ENCODE measurements at regions of chr21 and their contacts with region 1.

Region 1: DNA sequence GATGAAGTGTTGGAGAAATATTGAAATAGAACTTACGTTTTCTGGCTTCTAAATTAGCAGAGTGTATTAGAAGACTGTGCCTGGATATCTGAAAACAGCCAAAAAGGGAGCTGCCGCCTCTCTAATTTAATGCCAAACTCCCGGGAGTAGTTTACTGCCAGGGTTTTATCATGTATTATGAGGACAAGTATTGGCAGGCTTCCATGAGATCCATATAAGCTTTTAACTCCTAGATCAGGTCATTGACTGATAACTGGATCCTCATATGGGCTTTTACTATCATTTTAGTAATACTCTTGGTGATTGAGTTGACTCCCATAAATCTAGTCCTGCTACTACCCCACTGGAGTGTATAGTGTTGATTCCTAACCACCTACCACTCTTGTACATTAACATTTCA is 178.4 kb upstream of the CXADR start:
- DNase-seq: no peak
- H3K4me3 ChIP-seq: no peak overlapping the region
- H3K27ac ChIP-seq: no peak overlapping the region
- H3K4me1 ChIP-seq: no peaks in the 10 kb centered on the region
- H3K27me3 ChIP-seq: peaks cover 9% of the 10 kb centered on the region; the same call in 1 of the 2 replicates
- CTCF ChIP-seq: no peak

Region 2: GRCh38 chr21:16377120-16377658 is 957.3 kb before region 1 on chr21:
- CTCF ChIA-PET with region 1: no interaction called
- POLR2A ChIA-PET with region 1: no interaction called
- intact Hi-C with region 1: no loop called
- DNase-seq: no peak
- H3K4me3 ChIP-seq: no peak overlapping the region
- H3K27ac ChIP-seq: no peak overlapping the region
- H3K4me1 ChIP-seq: no peaks in the 10 kb centered on the region
- H3K27me3 ChIP-seq: no peaks in the 10 kb centered on the region
- CTCF ChIP-seq: no peak

Region 3: GRCh38 chr21:16932314-16932713 is 402.2 kb before region 1 on chr21:
- CTCF ChIA-PET with region 1: no interaction called
- POLR2A ChIA-PET with region 1: interaction called, 17 read pairs
- intact Hi-C with region 1: no loop called
- DNase-seq: no peak
- H3K4me3 ChIP-seq: no peak overlapping the region
- H3K27ac ChIP-seq: no peak overlapping the region
- H3K4me1 ChIP-seq: no peaks in the 10 kb centered on the region
- H3K27me3 ChIP-seq: no peaks in the 10 kb centered on the region
- CTCF ChIP-seq: no peak

Region 4: GRCh38 chr21:17388226-17388625 is 53.7 kb after region 1 on chr21:
- CTCF ChIA-PET with region 1: no interaction called
- POLR2A ChIA-PET with region 1: no interaction called
- intact Hi-C with region 1: no loop called
- DNase-seq: no peak
- H3K4me3 ChIP-seq: no peak overlapping the region
- H3K27ac ChIP-seq: no peak overlapping the region
- H3K4me1 ChIP-seq: peaks cover 23% of the 10 kb centered on the region
- H3K27me3 ChIP-seq: no peaks in the 10 kb centered on the region
- CTCF ChIP-seq: no peak

Measured in PC-9 (cell line).